Panc1 (cell line): ENCODE measurements at regions of chr9 and their contacts with region 1.

Region 1: DNA sequence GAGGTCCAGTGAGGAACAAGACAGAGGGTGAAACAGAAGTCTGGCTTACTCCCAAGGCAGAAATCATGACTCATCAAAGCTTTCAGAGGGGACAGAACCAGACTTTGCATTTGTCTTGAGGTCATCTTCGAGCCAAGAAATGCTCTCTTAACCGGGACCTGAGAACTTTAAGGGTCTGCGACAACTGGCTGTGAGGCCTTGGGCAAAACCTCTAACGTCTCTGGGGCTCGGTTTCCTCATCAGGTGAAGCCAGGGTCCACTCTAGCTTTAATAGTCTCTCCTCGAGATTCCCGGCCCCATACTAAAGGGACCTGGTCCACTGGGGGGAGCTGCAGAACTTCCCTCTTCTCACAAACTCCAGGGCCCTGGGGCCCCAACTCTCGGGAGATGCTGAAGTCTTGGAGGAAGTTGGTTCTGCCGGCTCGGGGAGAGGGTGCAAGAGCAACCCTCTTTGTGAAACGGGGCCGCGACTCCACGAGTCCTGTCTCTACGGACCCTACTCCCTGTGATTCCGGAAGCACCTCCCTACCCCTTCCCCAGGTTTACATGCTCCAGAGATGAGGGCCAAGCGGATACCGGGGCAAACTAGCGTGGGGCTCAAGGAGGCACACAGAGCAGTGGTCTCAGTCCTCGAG is 2.6 kb downstream of the GLIS3 start:
- DNase-seq: no peak
- ATAC-seq: peak; percentile 68
- H3K4me3 ChIP-seq: peak overlapping the region; percentile 56 to 69
- H3K27ac ChIP-seq: peak overlapping the region; percentile 49
- H3K4me1 ChIP-seq: peaks cover 2% of the 10 kb centered on the region
- H3K27me3 ChIP-seq: no peaks in the 10 kb centered on the region
- CTCF ChIP-seq: peak; percentile 46

Region 2: DNA sequence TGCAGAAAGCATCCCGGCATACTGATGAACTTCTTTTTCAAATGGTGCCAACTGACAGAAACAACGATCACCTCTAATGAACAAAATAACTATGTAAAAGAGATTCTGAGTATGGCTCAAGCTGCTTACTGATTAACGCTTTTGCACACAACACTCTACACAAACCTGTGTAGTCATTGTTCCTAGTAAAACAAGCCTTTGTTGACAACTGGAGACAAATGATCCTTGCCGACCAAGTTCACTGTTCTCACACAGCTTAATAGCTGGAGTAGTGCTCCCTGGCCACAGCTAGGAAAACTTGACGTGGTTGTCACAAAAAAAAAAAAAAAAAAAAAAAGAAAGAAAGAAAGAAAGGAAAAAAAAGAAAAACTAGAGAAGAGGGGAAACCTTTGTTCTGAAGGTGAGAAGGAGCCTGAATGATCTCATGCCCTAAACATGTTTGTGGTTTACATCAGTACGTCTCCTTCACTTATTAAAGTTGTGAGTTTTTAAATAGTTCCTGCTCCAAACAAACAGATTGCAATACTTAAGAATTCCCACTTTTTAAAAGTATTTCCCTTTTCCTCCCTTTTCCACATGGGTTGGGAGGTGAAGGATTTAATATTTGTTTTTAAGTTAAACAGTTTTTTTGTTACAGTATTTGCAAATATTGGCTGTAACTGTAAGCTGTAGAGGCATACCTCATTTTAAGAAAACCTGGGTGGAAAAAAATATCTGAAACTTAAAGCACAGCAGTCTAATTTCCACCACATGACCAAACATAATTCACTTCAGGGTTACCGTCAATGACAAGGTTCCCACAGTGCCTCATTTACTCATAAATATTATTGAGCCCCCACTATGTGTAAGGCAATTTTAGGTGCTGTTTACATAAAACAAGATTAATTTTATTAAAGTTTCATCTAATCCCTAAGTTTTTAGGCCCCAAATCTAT is 61.1 kb before region 1 on chr9:
- CTCF ChIA-PET with region 1: interaction called, 10 read pairs
- POLR2A ChIA-PET with region 1: no interaction called
- in situ Hi-C with region 1: no loop called
- intact Hi-C with region 1: loop called (anchors 10 kb)
- DNase-seq: no peak
- ATAC-seq: 0 out of 2 replicates have a peak, but pooled peaks have one; percentile 56
- H3K4me3 ChIP-seq: no peak overlapping the region
- H3K27ac ChIP-seq: peak overlapping the region; percentile 44; the same call in 1 of the 2 replicates
- H3K4me1 ChIP-seq: no peaks in the 10 kb centered on the region; the same call in 1 of the 2 replicates
- H3K27me3 ChIP-seq: no peaks in the 10 kb centered on the region
- CTCF ChIP-seq: no peak

Region 3: DNA sequence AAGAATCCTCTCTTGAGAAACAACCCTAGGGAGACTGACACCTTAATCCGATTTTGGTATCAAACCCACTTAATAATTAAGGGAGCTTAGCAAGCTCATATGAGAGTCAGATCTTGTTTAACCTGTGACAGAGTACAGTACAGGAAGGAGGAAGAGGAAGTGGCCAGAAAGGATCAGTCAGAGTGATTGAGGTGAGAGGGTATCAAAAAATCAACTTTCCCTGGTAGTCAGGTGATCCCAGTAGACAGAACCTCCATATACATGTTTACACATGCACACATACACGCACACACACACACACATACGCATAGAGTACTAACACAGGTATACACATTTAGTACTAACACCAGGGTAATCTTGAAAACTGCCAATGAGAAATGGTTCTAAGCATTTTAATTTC is 54.2 kb before region 1 on chr9:
- CTCF ChIA-PET with region 1: no interaction called
- POLR2A ChIA-PET with region 1: no interaction called
- in situ Hi-C with region 1: no loop called
- intact Hi-C with region 1: loop called (anchors 10 kb)
- DNase-seq: no peak
- ATAC-seq: no peak
- H3K4me3 ChIP-seq: no peak overlapping the region
- H3K27ac ChIP-seq: no peak overlapping the region
- H3K4me1 ChIP-seq: no peaks in the 10 kb centered on the region
- H3K27me3 ChIP-seq: no peaks in the 10 kb centered on the region
- CTCF ChIP-seq: no peak

Region 4: GRCh38 chr9:4339357-4339756 is 42.1 kb after region 1 on chr9:
- CTCF ChIA-PET with region 1: no interaction called
- POLR2A ChIA-PET with region 1: no interaction called
- in situ Hi-C with region 1: no loop called
- intact Hi-C with region 1: no loop called
- DNase-seq: peak; percentile 45
- ATAC-seq: no peak
- H3K4me3 ChIP-seq: no peak overlapping the region
- H3K27ac ChIP-seq: no peak overlapping the region
- H3K4me1 ChIP-seq: no peaks in the 10 kb centered on the region
- H3K27me3 ChIP-seq: no peaks in the 10 kb centered on the region
- CTCF ChIP-seq: peak; percentile 59